Body of pancreas (tissue), 4 donors: ENCODE measurements at regions of chr5 and their contacts with region 1.

Region 1: DNA sequence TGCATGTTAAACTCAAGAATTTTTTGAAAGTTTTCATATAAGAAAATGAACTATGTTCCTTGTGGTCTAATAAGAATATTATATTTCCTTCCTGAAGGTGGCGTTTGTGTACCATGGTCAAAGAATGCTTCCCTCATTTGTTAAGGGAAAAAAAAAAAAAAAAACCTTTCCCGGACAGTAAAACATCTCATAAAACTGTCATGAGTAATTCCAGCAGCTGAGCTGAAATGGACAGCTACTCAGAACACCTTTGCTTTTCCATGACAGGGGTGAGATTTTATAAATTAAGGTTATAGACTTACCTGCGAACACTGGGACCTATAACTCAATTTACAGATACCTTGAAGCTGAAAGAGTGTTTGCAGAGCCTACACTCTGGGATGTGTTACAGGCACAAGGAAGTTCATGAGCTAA is 113.2 kb upstream of the RANBP3L start:
- DNase-seq: no peak
- ATAC-seq: no peak
- H3K4me3 ChIP-seq: no peak overlapping the region
- H3K27ac ChIP-seq: no peak overlapping the region
- H3K4me1 ChIP-seq: no peaks in the 10 kb centered on the region
- H3K27me3 ChIP-seq: no peaks in the 10 kb centered on the region
- CTCF ChIP-seq: peak; percentile 12 to 67 (median 54)
- POLR2A ChIP-seq: no peak

Region 2: GRCh38 chr5:36459176-36460135 is 44.6 kb after region 1 on chr5:
- intact Hi-C with region 1: no loop called
- DNase-seq: no peak
- ATAC-seq: no peak
- H3K4me3 ChIP-seq: no peak overlapping the region
- H3K27ac ChIP-seq: peak overlapping the region in 1 of 4 donors; percentile 13
- H3K4me1 ChIP-seq: no peaks in the 10 kb centered on the region
- H3K27me3 ChIP-seq: no peaks in the 10 kb centered on the region
- CTCF ChIP-seq: peak in 2 of 7 experiments; percentile 3 to 24
- POLR2A ChIP-seq: no peak

Region 3: DNA sequence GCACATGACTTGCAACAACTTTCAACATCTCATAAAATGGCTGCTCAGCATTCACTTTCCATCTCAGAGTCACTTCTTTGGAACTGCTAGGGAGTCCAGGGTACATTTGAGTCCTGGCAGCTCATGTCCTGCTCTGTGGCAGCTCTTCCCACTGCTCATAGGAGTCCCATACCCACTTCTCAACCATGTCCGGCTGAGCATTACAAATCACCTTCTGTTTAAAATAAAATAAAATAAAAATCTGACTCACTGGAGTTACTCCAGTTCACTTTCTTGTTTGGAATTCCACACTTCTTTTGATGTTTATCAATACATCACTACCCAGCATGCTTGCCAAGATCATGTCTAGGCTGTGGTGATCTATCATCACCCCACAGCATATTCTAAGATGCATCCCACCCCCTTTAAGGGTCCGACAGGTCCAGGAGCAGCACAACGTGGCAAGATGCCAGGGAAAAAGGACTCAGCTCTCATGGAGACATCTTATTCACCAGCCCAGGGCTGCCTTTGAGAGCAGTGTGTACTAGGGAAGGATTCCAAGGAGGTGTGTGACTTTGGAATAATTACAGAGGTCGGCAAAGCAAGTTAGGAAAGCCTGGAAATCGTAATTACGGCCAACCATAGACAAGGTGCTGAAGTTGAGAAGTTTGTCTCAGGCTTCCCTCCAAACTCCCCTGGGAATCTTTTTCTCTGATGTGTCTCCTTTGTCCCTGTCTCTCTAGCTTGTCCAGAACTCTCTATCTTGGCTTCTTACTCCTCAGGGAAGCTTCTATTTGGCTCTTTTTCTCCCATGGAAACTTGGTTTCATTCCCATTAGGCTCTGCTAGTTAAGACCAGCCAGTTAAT is 80.1 kb after region 1 on chr5:
- intact Hi-C with region 1: no loop called
- DNase-seq: peak in 3 of 4 donors; percentile 6 to 24 (median 11)
- ATAC-seq: peak; percentile 31
- H3K4me3 ChIP-seq: no peak overlapping the region
- H3K27ac ChIP-seq: no peak overlapping the region
- H3K4me1 ChIP-seq: no peaks in the 10 kb centered on the region
- H3K27me3 ChIP-seq: no peaks in the 10 kb centered on the region
- CTCF ChIP-seq: no peak
- POLR2A ChIP-seq: no peak

Region 4: DNA sequence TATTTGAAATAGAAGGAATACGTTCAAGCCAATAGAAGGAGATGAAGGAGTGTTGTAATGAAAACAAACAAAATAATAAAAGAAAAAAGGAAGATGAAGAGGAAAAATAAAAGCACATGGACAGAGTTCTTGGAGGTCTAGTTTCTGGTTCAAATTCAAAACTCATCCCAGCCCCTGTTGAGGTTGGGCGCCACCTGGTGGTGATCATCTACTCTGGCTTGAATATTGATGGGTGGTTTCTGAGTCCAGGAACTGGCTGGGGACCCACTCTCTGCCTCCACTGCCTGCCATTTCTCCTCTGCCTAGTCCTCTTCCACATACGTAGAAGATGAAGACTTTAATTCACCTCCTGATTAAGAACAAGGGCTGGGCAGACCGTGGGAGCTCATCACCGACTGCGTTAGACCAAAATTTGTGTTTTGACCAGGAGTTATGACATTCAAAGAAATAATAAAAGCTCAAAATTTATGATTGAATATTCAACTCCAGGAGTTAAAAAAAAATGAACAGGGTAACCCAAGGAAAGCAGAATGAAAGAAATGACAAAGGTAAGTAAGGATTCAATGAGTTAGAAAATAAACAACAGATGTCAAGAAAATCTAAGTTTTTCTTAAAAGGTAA is 92.6 kb after region 1 on chr5:
- intact Hi-C with region 1: loop called (anchors 5 kb)
- DNase-seq: peak; percentile 71 to 82 (median 79)
- ATAC-seq: peak; percentile 74
- H3K4me3 ChIP-seq: no peak overlapping the region
- H3K27ac ChIP-seq: no peak overlapping the region
- H3K4me1 ChIP-seq: no peaks in the 10 kb centered on the region
- H3K27me3 ChIP-seq: no peaks in the 10 kb centered on the region
- CTCF ChIP-seq: peak; percentile 51 to 90 (median 77)
- POLR2A ChIP-seq: no peak

Region 5: DNA sequence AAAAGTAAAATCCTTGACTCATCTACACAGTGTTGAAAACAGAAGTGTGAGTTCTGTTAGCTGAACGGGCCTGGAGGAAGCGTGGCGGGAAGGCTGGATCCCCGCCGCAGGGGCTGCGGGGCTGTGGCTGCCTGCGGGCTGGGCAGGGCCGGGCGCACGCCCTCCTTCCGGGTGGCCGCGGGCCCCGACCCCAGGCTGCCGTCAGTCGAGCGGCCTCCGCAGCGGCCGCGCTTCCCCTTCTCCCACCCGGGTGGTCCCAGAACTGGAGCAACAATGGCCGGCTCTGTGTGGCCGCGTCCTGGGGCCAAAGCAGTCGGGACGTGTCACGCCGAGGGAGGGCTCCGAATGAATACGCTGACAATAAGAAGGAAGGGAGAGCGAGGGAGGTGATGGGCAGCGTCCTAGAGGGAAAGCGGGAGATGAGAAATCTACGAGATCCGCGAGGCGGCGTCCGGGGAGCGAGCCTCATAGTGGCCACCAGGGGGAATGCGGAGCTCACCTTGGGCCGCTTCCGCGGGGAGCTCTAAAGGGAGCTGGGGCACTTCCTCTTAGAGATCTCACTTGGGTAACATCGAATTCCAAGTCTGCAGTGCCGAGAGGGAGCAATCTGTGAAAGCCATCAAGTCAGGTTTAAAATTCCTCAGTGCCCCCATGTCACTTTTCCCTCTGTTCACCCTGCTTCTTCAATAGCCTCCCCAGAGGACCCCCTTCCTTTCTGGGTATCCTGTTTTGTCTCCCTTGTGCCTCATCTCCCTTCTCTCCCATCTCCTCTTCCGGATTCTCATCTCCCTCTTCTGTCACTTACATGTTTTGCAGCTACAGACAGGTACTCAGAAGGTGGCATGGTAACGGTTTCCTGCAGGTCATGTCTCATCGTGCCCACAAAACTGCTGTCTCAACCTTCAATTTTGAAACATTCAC is 275.4 kb after region 1 on chr5:
- intact Hi-C with region 1: loop called (anchors 5 kb)
- DNase-seq: peak; percentile 78 to 81 (median 80)
- ATAC-seq: peak; percentile 88
- H3K4me3 ChIP-seq: peak overlapping the region in 1 of 2 donors; percentile 28
- H3K27ac ChIP-seq: peak overlapping the region; percentile 36 to 81 (median 44)
- H3K4me1 ChIP-seq: peaks cover 20% of the 10 kb centered on the region
- H3K27me3 ChIP-seq: peaks cover 0 to 5% of the 10 kb centered on the region in 2 donors
- CTCF ChIP-seq: peak; percentile 73 to 91 (median 83)
- POLR2A ChIP-seq: peak in 2 of 3 donors; percentile 41 to 48